GM12878 (cell line): ENCODE measurements at regions of chr9 and their contacts with region 1.

Region 1: GRCh38 chr9:214648-215493 is at the start of gene DOCK8:
- DNase-seq: no peak
- ATAC-seq: peak; percentile 95
- H3K4me3 ChIP-seq: peak within 1 kb of the TSS; percentile 85
- H3K27ac ChIP-seq: peak within 1 kb of the TSS; percentile 9; the same call in 1 of the 2 replicates
- H3K4me1 ChIP-seq: no peaks in the 10 kb centered on the region
- H3K27me3 ChIP-seq: no peaks in the 10 kb centered on the region; a peak in 1 of 4 replicates
- CTCF ChIP-seq: peak; percentile 51 to 62 (median 52); a peak in 5 of 6 replicates
- EP300 ChIP-seq: no peak
- POLR2A ChIP-seq: peak; percentile 80
- RAD21 ChIP-seq: peak; percentile 42
- polyA plus RNA-seq, gene DOCK8: 35.4 to 35.6 TPM

Region 2: DNA sequence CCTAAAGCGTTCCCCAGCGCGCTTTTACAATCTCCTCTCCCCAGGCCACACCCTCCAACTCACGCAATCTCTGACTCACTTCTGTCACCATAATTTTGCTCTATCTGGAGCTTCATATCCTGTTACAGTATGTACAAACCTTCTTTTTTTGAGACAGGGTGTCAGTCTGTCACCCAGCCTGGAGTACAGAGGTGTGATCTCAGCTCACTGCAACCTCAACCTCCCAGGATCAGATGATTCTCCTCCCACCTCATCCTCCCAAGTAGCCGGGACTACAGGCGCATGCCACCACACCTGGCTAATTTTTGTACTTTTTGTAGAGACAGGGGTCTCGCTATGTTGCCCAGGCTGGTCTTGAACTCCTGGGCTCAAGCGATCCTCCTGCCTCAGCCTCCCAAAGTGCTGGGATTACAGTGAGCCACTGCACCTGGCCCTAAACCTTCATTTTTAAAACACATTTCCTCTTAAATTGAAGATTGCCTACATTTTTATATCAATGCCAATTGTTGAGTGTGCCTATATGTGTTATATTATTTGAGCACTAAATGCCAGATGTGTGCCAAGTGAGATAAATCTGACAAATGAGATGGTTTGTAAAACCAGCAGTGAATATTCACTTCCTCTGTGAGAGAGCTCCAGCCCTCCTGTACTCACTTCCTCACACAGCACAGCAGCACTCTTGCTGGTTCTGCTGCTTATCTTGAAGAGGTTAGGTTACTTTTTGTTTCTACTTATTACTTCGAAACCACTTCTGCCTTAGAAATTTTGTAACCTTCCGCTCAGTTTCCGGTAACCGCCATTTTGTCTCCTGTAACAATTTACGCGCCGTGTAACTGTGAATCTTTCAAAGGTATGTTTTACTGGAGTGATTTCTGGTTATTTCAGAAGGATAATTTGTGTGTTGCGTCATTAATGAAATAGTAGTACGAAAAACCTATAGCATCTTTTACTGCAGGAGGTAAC is 57.7 kb after region 1 on chr9:
- CTCF ChIA-PET with region 1: interaction called, 5 read pairs
- POLR2A ChIA-PET with region 1: interaction called, 3 read pairs
- RAD21 ChIA-PET with region 1: no interaction called
- SMC1A ChIA-PET with region 1: interaction called, 3 read pairs
- in situ Hi-C with region 1: no loop called
- intact Hi-C with region 1: loop called (anchors 2 kb)
- DNase-seq: peak; percentile 89
- ATAC-seq: peak; percentile 97
- H3K4me3 ChIP-seq: peak overlapping the region; percentile 70; the same call in 1 of the 2 replicates
- H3K27ac ChIP-seq: peak overlapping the region; percentile 88
- H3K4me1 ChIP-seq: peaks cover 5% of the 10 kb centered on the region
- H3K27me3 ChIP-seq: no peaks in the 10 kb centered on the region
- CTCF ChIP-seq: no peak
- EP300 ChIP-seq: no peak
- POLR2A ChIP-seq: peak; percentile 73
- RAD21 ChIP-seq: 0 out of 2 replicates have a peak, but pooled peaks have one; percentile 19